ENCODE measurements at regions of chr12 and their contacts with region 1.

Region 1: DNA sequence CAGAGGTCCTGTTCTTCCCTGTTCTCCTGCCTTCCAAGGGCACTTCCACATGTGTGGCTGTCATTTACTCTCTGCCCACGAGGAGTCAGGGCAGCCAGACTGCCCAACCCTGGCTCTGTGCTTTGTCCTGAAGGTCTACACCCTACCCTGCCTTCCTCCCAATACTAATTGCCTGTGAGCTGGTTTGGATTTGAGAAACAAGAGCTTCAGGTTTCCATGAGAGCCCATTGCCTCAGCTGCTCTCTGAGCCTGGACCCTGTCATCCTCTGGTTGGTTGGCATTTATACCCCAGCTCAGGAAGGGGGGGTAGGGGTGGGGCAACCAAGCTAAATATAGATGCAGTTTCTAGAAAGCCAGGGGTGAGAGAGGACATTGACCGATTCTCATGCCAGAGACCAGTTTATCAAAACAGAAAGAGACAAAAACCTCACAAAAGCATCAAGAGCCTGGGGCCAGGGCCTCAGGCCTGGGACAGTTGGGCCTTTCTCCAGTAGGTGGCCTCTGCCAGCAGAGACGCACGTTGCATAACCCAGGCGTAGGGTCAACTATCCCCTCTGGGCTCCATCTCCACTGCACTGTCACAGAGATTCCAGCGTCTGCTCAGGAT is 34.5 kb downstream of the VDR start:
- DNase-seq: peak; percentile 34 to 40
- ATAC-seq: peak; percentile 80 to 90
- H3K4me3 ChIP-seq: no peak overlapping the region
- H3K27ac ChIP-seq: no peak overlapping the region
- H3K4me1 ChIP-seq: no peaks in the 10 kb centered on the region
- CTCF ChIP-seq: peak; percentile 23; the same call in 1 of the 3 replicates
- EP300 ChIP-seq: no peak
- POLR2A ChIP-seq: no peak
- RAD21 ChIP-seq: peak in 1 of 2 experiments; percentile 6; a peak in 1 of 5 replicates

Region 2: GRCh38 chr12:47855502-47855901 is 14.8 kb before region 1 on chr12:
- CTCF ChIA-PET with region 1: interaction called, 16 read pairs
- POLR2A ChIA-PET with region 1: no interaction called
- DNase-seq: no peak
- ATAC-seq: peak; percentile 34 to 38; a peak in 2 of 6 replicates
- H3K4me3 ChIP-seq: no peak overlapping the region
- H3K27ac ChIP-seq: no peak overlapping the region
- H3K4me1 ChIP-seq: peaks cover 7% of the 10 kb centered on the region; the same call in 2 of the 3 replicates
- CTCF ChIP-seq: no peak
- EP300 ChIP-seq: no peak
- POLR2A ChIP-seq: no peak
- RAD21 ChIP-seq: no peak

Region 3: DNA sequence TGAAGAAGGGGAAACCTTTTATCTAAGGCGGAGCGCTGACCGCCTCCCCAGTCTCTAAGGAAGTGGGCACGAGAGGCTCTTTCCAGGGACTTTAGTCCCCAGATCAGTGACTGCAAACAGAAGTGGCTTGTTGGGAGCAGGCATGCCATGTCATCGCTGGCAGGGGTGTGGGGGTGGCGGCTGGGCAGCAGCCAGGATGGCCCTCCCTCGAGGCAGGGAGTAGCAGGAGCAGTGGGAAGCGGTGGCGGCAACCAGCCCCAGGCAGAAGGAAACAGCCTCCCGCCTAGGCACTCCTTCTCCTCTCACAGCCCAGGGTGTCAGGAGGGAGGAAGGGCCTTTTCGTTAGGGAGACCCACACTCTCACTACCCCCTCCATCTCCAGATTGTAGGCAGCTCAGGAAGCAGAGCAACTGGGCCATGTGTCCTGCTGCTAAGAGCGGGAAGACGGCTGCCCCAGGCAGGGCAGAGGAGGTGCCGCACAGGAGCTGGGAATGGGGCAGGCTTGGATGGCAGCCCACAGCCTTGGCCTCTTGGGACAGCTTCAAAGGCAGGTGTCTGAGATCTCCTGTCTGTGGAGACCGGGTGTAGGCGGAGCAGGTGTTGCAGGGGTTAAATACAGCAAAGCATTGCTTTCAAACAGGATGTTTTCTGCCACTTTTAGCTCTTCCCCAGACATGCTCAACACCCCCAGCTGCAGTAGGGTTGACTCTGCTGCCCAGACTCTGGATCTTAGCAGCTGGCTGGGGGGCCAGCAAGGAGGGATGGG is 12.7 kb after region 1 on chr12:
- CTCF ChIA-PET with region 1: interaction called, 16 read pairs
- POLR2A ChIA-PET with region 1: no interaction called
- DNase-seq: no peak
- ATAC-seq: no peak; a peak in 1 of 6 replicates
- H3K4me3 ChIP-seq: no peak overlapping the region
- H3K27ac ChIP-seq: peak overlapping the region in 1 of 2 experiments; percentile 66; a peak in 4 of 6 replicates
- H3K4me1 ChIP-seq: peaks cover 9% of the 10 kb centered on the region; the same call in 1 of the 3 replicates
- CTCF ChIP-seq: no peak
- EP300 ChIP-seq: no peak
- POLR2A ChIP-seq: no peak
- RAD21 ChIP-seq: no peak

Region 4: GRCh38 chr12:48078901-48079300 is 208.6 kb after region 1 on chr12:
- CTCF ChIA-PET with region 1: no interaction called
- POLR2A ChIA-PET with region 1: no interaction called
- DNase-seq: no peak
- ATAC-seq: no peak
- H3K4me3 ChIP-seq: no peak overlapping the region
- H3K27ac ChIP-seq: no peak overlapping the region
- H3K4me1 ChIP-seq: no peaks in the 10 kb centered on the region
- CTCF ChIP-seq: no peak
- EP300 ChIP-seq: no peak
- POLR2A ChIP-seq: no peak
- RAD21 ChIP-seq: no peak

Measured in A549 (cell line).